CD4-positive, alpha-beta memory T cell (primary cell): ENCODE measurements at regions of chr1 and their contacts with region 1.

Region 1: GRCh38 chr1:39609618-39610331 is 29.7 kb downstream of the HEYL start:
- DNase-seq: peak; percentile 55 to 74 (median 69)
- H3K4me3 ChIP-seq: no peak overlapping the region
- H3K4me3 Mint-ChIP-seq: peak overlapping the region in 1 of 8 donors; percentile 69
- H3K27ac ChIP-seq: no peak overlapping the region
- H3K27ac Mint-ChIP-seq: no peak overlapping the region
- H3K4me1 ChIP-seq: peaks cover 3% of the 10 kb centered on the region
- H3K4me1 Mint-ChIP-seq: peaks cover 3 to 12% (median 6%) of the 10 kb centered on the region in 4 donors
- H3K27me3 ChIP-seq: no peaks in the 10 kb centered on the region
- H3K27me3 Mint-ChIP-seq: peaks cover 4 to 7% of the 10 kb centered on the region in 2 donors

Region 2: DNA sequence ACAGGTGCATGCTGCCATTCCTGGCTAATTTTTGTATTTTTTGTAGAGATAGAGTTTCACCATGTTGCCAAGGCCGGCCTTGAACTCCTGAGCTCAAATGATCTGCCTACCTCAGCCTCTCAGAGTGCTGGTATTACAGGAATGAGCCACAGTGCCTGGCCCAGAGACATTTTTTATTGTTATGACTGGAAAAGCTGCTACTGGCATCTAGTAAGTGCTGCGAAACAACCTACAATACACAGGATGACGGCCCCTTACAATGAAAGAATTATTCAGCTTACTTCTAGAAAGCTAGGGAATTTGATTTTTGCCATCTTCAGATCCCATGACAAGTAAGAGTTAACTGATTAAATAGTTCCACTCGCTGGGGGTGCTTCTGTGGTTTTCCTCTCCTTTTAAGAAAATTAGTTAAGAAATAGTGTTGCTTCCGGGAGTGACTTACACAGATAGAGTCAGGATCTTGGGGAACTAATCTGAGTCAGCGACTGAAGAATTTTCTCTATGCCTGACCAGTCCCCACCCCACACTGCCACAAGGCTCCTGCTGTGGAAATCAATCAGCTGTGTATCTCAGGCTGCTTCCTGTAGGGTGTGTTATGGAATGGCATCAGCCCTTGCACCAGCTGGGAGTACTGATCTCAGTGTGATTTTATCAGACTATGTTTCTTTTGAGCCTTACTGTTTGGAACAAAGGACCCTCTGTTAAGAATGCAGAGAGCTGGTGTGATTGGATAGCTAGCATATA is 211.3 kb before region 1 on chr1:
- CTCF ChIA-PET with region 1: no interaction called
- POLR2A ChIA-PET with region 1: no interaction called
- intact Hi-C with region 1: no loop called
- DNase-seq: peak in 2 of 5 donors; percentile 9 to 63
- H3K4me3 ChIP-seq: no peak overlapping the region
- H3K4me3 Mint-ChIP-seq: peak overlapping the region in 7 of 8 donors; percentile 20 to 79 (median 64)
- H3K27ac ChIP-seq: no peak overlapping the region
- H3K27ac Mint-ChIP-seq: peak overlapping the region; percentile 24 to 82 (median 44)
- H3K4me1 ChIP-seq: peaks cover 67% of the 10 kb centered on the region
- H3K4me1 Mint-ChIP-seq: peaks cover 55 to 74% (median 67%) of the 10 kb centered on the region in 4 donors
- H3K27me3 ChIP-seq: no peaks in the 10 kb centered on the region
- H3K27me3 Mint-ChIP-seq: no peaks in the 10 kb centered on the region

Region 3: GRCh38 chr1:39566441-39567137 is 43.2 kb before region 1 on chr1:
- CTCF ChIA-PET with region 1: no interaction called
- POLR2A ChIA-PET with region 1: no interaction called
- intact Hi-C with region 1: no loop called
- DNase-seq: no peak
- H3K4me3 ChIP-seq: no peak overlapping the region
- H3K4me3 Mint-ChIP-seq: no peak overlapping the region
- H3K27ac ChIP-seq: no peak overlapping the region
- H3K27ac Mint-ChIP-seq: no peak overlapping the region
- H3K4me1 ChIP-seq: peaks cover 5% of the 10 kb centered on the region
- H3K4me1 Mint-ChIP-seq: peaks cover 5 to 8% (median 6%) of the 10 kb centered on the region in 4 donors
- H3K27me3 ChIP-seq: no peaks in the 10 kb centered on the region
- H3K27me3 Mint-ChIP-seq: no peaks in the 10 kb centered on the region

Region 4: DNA sequence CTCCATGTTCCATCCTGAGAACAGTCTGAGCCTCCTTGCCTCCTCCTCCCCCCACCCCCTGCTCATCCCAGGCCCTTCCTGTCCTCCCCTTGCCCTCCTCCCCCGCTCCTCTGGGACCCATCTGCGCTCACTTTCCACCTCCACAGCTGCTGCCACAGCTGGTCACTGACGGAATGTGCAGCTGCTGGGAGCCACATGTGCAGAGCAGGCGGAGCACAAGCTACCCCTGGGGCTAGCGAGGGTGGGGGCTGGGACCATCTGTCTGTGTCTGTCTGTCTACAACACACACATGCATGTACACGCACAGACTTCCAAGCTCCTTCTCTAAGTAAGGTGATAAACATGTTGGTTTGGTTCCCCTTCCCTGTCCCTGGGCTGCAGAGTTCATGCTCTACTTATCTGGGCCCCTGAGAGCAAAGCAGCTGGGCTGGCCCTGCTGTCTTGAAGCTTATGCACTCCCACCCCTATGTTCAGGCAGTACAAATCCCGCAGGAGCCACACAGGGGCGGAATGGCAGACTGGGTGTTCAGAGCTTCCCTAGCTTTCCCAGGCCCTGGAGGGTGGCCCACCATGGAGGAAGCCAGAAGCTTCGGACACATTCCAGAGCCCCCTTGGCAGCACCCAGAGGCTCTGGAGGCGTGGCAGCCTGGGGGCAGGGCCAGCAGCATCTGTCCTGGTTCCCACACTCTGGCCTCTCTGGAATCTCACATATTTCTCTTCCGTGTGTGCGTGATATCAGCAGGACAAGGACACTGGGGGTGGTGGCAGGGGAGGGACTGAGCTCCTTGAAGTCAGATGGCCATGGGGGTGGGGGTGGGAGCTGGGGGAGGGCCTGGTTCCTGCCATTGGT is 36.7 kb after region 1 on chr1:
- CTCF ChIA-PET with region 1: interaction called, 280 read pairs
- POLR2A ChIA-PET with region 1: no interaction called
- intact Hi-C with region 1: no loop called
- DNase-seq: no peak
- H3K4me3 ChIP-seq: no peak overlapping the region
- H3K4me3 Mint-ChIP-seq: no peak overlapping the region
- H3K27ac ChIP-seq: no peak overlapping the region
- H3K27ac Mint-ChIP-seq: no peak overlapping the region
- H3K4me1 ChIP-seq: no peaks in the 10 kb centered on the region
- H3K4me1 Mint-ChIP-seq: no peaks in the 10 kb centered on the region
- H3K27me3 ChIP-seq: no peaks in the 10 kb centered on the region
- H3K27me3 Mint-ChIP-seq: no peaks in the 10 kb centered on the region

Region 5: DNA sequence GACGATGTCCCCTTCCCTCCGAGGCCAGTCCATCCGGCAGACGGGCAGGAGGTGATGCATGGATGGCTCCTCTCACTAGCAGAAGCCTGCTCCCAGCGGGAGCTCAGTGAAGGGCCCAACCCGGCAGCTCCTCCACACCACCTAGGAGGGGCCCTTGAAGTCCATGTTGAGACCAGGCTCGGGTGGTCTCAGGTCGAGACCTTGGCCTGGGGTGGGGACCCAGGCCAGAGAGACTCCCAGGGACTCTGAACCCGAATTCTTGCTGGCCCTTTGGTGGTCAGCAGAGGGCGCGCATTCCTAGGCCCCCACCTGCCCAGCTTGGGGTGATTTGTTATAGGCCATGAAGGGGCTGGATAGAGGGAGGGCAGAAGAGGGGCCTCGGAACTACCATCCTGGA is 62.8 kb after region 1 on chr1:
- CTCF ChIA-PET with region 1: interaction called, 17 read pairs
- POLR2A ChIA-PET with region 1: no interaction called
- intact Hi-C with region 1: no loop called
- DNase-seq: peak in 2 of 5 donors; percentile 31 to 36
- H3K4me3 ChIP-seq: no peak overlapping the region
- H3K4me3 Mint-ChIP-seq: peak overlapping the region; percentile 57 to 78 (median 69)
- H3K27ac ChIP-seq: no peak overlapping the region
- H3K27ac Mint-ChIP-seq: peak overlapping the region in 1 of 7 donors; percentile 11
- H3K4me1 ChIP-seq: peaks cover 18% of the 10 kb centered on the region
- H3K4me1 Mint-ChIP-seq: peaks cover 0 to 7% (median 5%) of the 10 kb centered on the region in 4 donors
- H3K27me3 ChIP-seq: peaks cover 17% of the 10 kb centered on the region
- H3K27me3 Mint-ChIP-seq: peaks cover 14 to 16% of the 10 kb centered on the region in 2 donors

Region 6: GRCh38 chr1:39720094-39720999 is 110.6 kb after region 1 on chr1:
- CTCF ChIA-PET with region 1: interaction called, 46 read pairs
- POLR2A ChIA-PET with region 1: interaction called, 4 read pairs
- intact Hi-C with region 1: loop called (anchors 1 kb)
- DNase-seq: peak in 4 of 5 donors; percentile 65 to 76 (median 72)
- H3K4me3 ChIP-seq: no peak overlapping the region
- H3K4me3 Mint-ChIP-seq: no peak overlapping the region
- H3K27ac ChIP-seq: no peak overlapping the region
- H3K27ac Mint-ChIP-seq: no peak overlapping the region
- H3K4me1 ChIP-seq: no peaks in the 10 kb centered on the region
- H3K4me1 Mint-ChIP-seq: peaks cover 0 to 3% (median under 1%) of the 10 kb centered on the region in 4 donors
- H3K27me3 ChIP-seq: peaks cover 5% of the 10 kb centered on the region
- H3K27me3 Mint-ChIP-seq: peaks cover 27 to 30% of the 10 kb centered on the region in 2 donors

Region 7: DNA sequence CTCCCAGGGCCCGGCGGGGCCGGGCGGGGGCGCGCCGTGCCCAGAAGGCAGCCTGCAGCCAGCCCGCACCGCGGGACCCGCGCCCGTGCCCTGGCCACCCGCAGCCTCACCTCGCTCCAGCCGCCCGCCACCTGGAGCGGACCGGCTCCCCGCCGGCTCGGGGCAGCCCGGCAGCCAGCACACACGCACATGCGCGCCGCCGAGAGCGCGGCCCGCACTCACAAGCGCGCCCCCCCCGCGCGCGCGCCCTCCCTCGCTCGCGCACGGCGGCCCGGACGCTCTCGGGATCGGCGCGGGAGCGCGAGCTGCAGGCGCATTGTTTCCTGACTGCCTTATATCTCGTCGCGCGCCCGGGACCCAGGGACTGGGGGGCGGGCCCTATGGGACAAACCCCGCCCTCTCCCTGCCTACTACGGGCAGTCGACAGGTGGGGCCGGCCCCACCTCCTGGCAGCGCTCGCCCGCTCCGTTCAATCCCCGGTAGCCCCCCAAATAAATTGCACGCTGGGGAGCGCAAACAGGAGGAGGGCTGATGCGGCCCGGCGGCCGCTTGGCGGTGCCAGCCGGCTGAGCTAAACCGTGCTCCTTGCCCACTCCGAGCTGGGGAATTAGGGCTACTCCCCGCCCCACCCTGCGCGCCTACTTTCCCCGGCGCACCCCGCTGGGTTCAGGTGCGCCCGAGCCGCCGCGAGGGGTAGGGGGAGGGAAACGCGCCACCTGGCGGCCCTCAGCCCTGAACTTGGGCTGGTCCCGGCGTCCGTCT is 292.1 kb after region 1 on chr1 and contains the start of gene MYCL:
- CTCF ChIA-PET with region 1: interaction called, 4 read pairs
- POLR2A ChIA-PET with region 1: no interaction called
- intact Hi-C with region 1: loop called (anchors 1 kb)
- DNase-seq: peak; percentile 59 to 68 (median 63)
- H3K4me3 ChIP-seq: peak within 1 kb of the TSS; percentile 23 to 58
- H3K4me3 Mint-ChIP-seq: peak within 1 kb of the TSS; percentile 72 to 84 (median 78)
- H3K27ac ChIP-seq: no peak within 1 kb of the TSS
- H3K27ac Mint-ChIP-seq: no peak within 1 kb of the TSS
- H3K4me1 ChIP-seq: peaks cover 9% of the 10 kb centered on the region
- H3K4me1 Mint-ChIP-seq: peaks cover 0 to 11% (median 4%) of the 10 kb centered on the region in 4 donors
- H3K27me3 ChIP-seq: peaks cover 9% of the 10 kb centered on the region
- H3K27me3 Mint-ChIP-seq: peaks cover 21 to 39% of the 10 kb centered on the region in 2 donors
- total RNA-seq, gene MYCL: 0.19 to 0.20 TPM

Region 8: GRCh38 chr1:40078512-40079333 is 468.9 kb after region 1 on chr1:
- CTCF ChIA-PET with region 1: no interaction called
- POLR2A ChIA-PET with region 1: no interaction called
- intact Hi-C with region 1: no loop called
- DNase-seq: peak; percentile 41 to 64 (median 45)
- H3K4me3 ChIP-seq: no peak overlapping the region
- H3K4me3 Mint-ChIP-seq: no peak overlapping the region
- H3K27ac ChIP-seq: no peak overlapping the region
- H3K27ac Mint-ChIP-seq: peak overlapping the region in 5 of 7 donors; percentile 12 to 81 (median 70)
- H3K4me1 ChIP-seq: peaks cover 1% of the 10 kb centered on the region
- H3K4me1 Mint-ChIP-seq: peaks cover 2 to 11% (median 3%) of the 10 kb centered on the region in 4 donors
- H3K27me3 ChIP-seq: no peaks in the 10 kb centered on the region
- H3K27me3 Mint-ChIP-seq: no peaks in the 10 kb centered on the region